Caco-2 (cell line): ENCODE measurements at regions of chr6 and their contacts with region 1.

Region 1: DNA sequence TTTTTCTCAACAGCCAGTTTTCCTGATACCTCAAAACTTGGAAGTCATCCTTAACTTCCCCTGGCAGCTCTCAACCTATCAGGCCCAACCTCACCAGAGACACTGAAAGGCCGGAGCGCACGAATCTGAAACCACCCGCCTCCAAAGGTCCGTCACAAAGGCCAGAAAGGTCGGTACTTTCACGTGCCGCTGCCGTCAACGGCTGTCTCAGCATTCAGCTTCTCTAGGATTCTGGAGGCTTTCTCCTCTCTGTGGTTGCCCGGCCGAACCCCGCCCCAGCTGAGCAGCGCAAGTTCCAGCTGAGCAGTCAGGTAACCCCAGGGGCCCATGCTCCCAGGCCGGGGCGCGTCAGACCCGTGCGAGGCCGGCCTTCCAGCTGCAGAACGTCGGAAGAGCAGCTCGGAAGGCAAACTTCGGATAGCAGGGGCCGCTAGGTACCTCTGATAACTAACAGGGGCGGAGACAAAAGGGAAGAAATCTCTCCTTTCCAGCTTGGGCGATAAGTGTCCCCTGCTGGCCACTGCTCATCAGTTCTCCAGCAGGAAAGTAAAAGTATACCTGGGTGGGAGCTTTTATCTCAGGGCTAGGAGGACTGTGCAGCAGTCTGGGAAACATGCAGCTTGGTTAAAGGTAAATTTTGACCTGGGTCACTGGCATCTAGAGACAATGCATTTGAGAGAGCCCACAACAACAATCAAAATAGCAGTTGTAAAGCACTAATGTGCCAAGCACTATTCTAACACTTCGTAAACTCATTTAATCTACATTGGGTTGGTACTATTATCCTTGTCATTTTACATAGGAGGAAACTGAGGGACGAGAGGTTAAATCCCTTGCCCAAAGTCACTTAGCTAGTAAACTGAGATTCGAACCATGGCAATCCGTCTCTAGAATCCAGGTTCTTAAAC is 16.1 kb downstream of the ZSCAN12 start:
- DNase-seq: peak; percentile 95
- H3K4me3 ChIP-seq: peak overlapping the region; percentile 50
- H3K4me3 Mint-ChIP-seq: peak overlapping the region; percentile 82
- H3K27ac Mint-ChIP-seq: peak overlapping the region; percentile 87
- H3K4me1 ChIP-seq: peaks cover 11% of the 10 kb centered on the region; the same call in 1 of the 2 replicates
- H3K4me1 Mint-ChIP-seq: peaks cover 18% of the 10 kb centered on the region
- H3K27me3 ChIP-seq: no peaks in the 10 kb centered on the region
- H3K27me3 Mint-ChIP-seq: peaks cover 7% of the 10 kb centered on the region
- CTCF ChIP-seq: peak; percentile 57 to 76

Region 2: GRCh38 chr6:28124102-28124970 is 259.2 kb before region 1 on chr6 and contains the start of gene ZSCAN16:
- CTCF ChIA-PET with region 1: interaction called, 6 read pairs
- POLR2A ChIA-PET with region 1: no interaction called
- intact Hi-C with region 1: loop called (anchors 1 kb)
- DNase-seq: peak; percentile 84 to 86
- H3K4me3 ChIP-seq: peak within 1 kb of the TSS; percentile 78
- H3K4me3 Mint-ChIP-seq: peak within 1 kb of the TSS; percentile 92
- H3K27ac Mint-ChIP-seq: peak within 1 kb of the TSS; percentile 83
- H3K4me1 ChIP-seq: no peaks in the 10 kb centered on the region
- H3K4me1 Mint-ChIP-seq: peaks cover 16% of the 10 kb centered on the region
- H3K27me3 ChIP-seq: no peaks in the 10 kb centered on the region
- H3K27me3 Mint-ChIP-seq: no peaks in the 10 kb centered on the region
- CTCF ChIP-seq: no peak
- total RNA-seq, gene ZSCAN16: 5.8 and 6.7 TPM in 2 replicates

Region 3: DNA sequence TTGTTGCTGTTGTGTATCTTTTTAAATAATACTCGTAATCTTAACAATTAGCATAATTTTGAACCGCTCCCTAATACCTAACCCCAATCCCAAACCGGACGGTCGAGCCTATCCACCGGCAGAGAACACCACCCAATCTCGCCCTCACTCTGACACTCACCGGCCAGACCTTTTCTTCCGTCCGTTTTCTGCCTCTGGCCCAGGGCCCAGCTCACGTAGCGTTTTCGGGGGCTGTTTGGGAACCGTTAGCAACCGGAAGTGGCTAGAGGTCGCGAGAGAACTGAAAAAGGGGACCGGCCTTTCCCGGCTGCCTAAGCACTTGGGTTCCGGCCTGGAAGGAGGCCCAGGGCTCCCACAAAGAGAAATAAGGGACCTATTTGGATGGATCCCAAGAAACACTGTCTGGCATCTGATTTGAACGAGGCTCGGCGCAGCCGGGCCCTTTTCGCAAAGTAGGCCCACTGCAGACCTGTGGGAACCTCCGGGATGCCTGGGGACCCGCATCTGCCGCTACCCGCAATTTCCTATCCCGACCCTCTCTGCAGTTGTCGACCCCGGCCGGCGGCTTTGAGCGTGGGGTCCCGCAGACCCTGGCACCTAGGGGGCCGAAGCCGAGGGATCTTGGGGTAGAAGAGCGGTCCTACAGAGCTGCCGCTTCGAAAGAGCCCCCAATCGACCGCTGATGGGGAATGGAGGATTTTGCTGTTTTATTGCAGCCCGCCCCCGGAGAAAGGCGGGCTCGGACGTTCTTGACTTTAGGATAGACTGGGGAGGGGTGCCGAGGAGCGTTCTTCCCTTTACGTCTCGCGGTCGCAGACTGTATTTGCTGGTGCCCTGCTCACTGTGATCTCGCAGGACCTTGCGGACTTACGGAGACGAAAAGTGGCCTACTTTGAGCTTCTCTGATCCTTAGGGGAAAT is 246.6 kb before region 1 on chr6:
- CTCF ChIA-PET with region 1: interaction called, 6 read pairs
- POLR2A ChIA-PET with region 1: interaction called, 4 read pairs
- intact Hi-C with region 1: loop called (anchors 1 kb)
- DNase-seq: peak; percentile 84 to 87
- H3K4me3 ChIP-seq: peak overlapping the region; percentile 77
- H3K4me3 Mint-ChIP-seq: peak overlapping the region; percentile 96
- H3K27ac Mint-ChIP-seq: peak overlapping the region; percentile 93
- H3K4me1 ChIP-seq: peaks cover 6% of the 10 kb centered on the region; the same call in 1 of the 2 replicates
- H3K4me1 Mint-ChIP-seq: peaks cover 13% of the 10 kb centered on the region
- H3K27me3 ChIP-seq: no peaks in the 10 kb centered on the region
- H3K27me3 Mint-ChIP-seq: no peaks in the 10 kb centered on the region
- CTCF ChIP-seq: no peak

Region 4: DNA sequence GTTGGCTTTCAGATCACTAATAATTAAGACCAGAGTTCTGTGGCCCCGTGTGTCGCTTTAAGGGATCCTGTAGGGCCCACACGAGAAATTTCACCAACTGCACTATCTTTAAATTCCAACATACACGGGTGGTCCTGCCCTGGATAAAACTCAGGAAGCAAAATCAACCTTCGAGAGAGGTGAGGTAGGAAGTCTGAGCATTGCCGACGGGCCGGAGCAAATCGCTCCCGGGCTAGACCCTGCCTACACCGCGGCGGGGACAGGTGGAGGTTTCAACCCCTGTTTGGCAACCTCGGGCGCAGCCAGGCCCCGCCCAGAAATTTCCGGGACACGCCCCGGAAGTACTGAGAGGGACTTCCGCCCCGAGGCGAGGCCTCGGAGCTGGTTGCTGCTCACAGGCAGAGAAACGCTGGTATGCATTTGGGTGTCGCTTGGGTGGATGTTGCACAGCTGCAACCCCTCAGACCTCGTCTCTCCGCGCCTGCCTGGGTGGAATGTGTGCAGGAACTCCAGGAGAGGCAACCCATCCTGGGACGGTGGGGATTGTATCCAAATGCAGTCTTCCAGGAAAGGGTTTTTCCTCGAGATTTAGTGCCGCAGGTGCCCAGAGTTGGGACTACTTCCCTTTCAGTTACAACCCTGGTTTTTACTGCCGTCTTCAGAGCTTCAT is 221.9 kb before region 1 on chr6:
- CTCF ChIA-PET with region 1: no interaction called
- POLR2A ChIA-PET with region 1: no interaction called
- intact Hi-C with region 1: no loop called
- DNase-seq: peak; percentile 57 to 63
- H3K4me3 ChIP-seq: peak overlapping the region; percentile 24
- H3K4me3 Mint-ChIP-seq: peak overlapping the region; percentile 49
- H3K27ac Mint-ChIP-seq: no peak overlapping the region
- H3K4me1 ChIP-seq: no peaks in the 10 kb centered on the region
- H3K4me1 Mint-ChIP-seq: no peaks in the 10 kb centered on the region
- H3K27me3 ChIP-seq: no peaks in the 10 kb centered on the region
- H3K27me3 Mint-ChIP-seq: no peaks in the 10 kb centered on the region
- CTCF ChIP-seq: no peak

Region 5: GRCh38 chr6:28225056-28225834 is 158.2 kb before region 1 on chr6 and contains the start of gene ZSCAN9:
- CTCF ChIA-PET with region 1: no interaction called
- POLR2A ChIA-PET with region 1: no interaction called
- intact Hi-C with region 1: loop called (anchors 2 kb)
- DNase-seq: peak; percentile 88 to 90
- H3K4me3 ChIP-seq: peak within 1 kb of the TSS; percentile 72
- H3K4me3 Mint-ChIP-seq: peak within 1 kb of the TSS; percentile 96
- H3K27ac Mint-ChIP-seq: peak within 1 kb of the TSS; percentile 82
- H3K4me1 ChIP-seq: peaks cover 5% of the 10 kb centered on the region; the same call in 1 of the 2 replicates
- H3K4me1 Mint-ChIP-seq: peaks cover 9% of the 10 kb centered on the region
- H3K27me3 ChIP-seq: peaks cover 1% of the 10 kb centered on the region; the same call in 1 of the 2 replicates
- H3K27me3 Mint-ChIP-seq: no peaks in the 10 kb centered on the region
- CTCF ChIP-seq: no peak
- total RNA-seq, gene ZSCAN9: 13.7 and 13.9 TPM in 2 replicates

Region 6: GRCh38 chr6:28252009-28252975 is 131.2 kb before region 1 on chr6 and contains the start of gene ZKSCAN4:
- CTCF ChIA-PET with region 1: no interaction called
- POLR2A ChIA-PET with region 1: interaction called, 3 read pairs
- intact Hi-C with region 1: loop called (anchors 1 kb)
- DNase-seq: peak; percentile 87 to 88
- H3K4me3 ChIP-seq: peak within 1 kb of the TSS; percentile 71
- H3K4me3 Mint-ChIP-seq: peak within 1 kb of the TSS; percentile 95
- H3K27ac Mint-ChIP-seq: peak within 1 kb of the TSS; percentile 82
- H3K4me1 ChIP-seq: peaks cover 4% of the 10 kb centered on the region; the same call in 1 of the 2 replicates
- H3K4me1 Mint-ChIP-seq: peaks cover 8% of the 10 kb centered on the region
- H3K27me3 ChIP-seq: no peaks in the 10 kb centered on the region
- H3K27me3 Mint-ChIP-seq: no peaks in the 10 kb centered on the region
- CTCF ChIP-seq: no peak
- total RNA-seq, gene ZKSCAN4: 5.0 and 5.5 TPM in 2 replicates

Region 7: GRCh38 chr6:28281288-28282064 is 102.0 kb before region 1 on chr6 and contains the start of gene PGBD1:
- CTCF ChIA-PET with region 1: interaction called, 3 read pairs
- POLR2A ChIA-PET with region 1: interaction called, 4 read pairs
- intact Hi-C with region 1: loop called (anchors 1 kb)
- DNase-seq: peak; percentile 81 to 84
- H3K4me3 ChIP-seq: peak within 1 kb of the TSS; percentile 74
- H3K4me3 Mint-ChIP-seq: peak within 1 kb of the TSS; percentile 85
- H3K27ac Mint-ChIP-seq: no peak within 1 kb of the TSS
- H3K4me1 ChIP-seq: 0 out of 2 replicates have a peak, but pooled peaks cover 4% of the 10 kb centered on the region
- H3K4me1 Mint-ChIP-seq: peaks cover 10% of the 10 kb centered on the region
- H3K27me3 ChIP-seq: no peaks in the 10 kb centered on the region
- H3K27me3 Mint-ChIP-seq: no peaks in the 10 kb centered on the region
- CTCF ChIP-seq: no peak
- total RNA-seq, gene PGBD1: 3.6 and 3.8 TPM in 2 replicates

Region 8: GRCh38 chr6:28335564-28336283 is 47.8 kb before region 1 on chr6 and contains the start of gene ZSCAN31:
- CTCF ChIA-PET with region 1: interaction called, 6 read pairs
- POLR2A ChIA-PET with region 1: interaction called, 17 read pairs
- intact Hi-C with region 1: no loop called
- DNase-seq: peak; percentile 92 to 95
- H3K4me3 ChIP-seq: peak within 1 kb of the TSS; percentile 54
- H3K4me3 Mint-ChIP-seq: no peak within 1 kb of the TSS
- H3K27ac Mint-ChIP-seq: no peak within 1 kb of the TSS
- H3K4me1 ChIP-seq: no peaks in the 10 kb centered on the region; the same call in 1 of the 2 replicates
- H3K4me1 Mint-ChIP-seq: peaks cover 16% of the 10 kb centered on the region
- H3K27me3 ChIP-seq: no peaks in the 10 kb centered on the region
- H3K27me3 Mint-ChIP-seq: peaks cover 2% of the 10 kb centered on the region
- CTCF ChIP-seq: no peak
- total RNA-seq, gene ZSCAN31: 1.7 and 3.4 TPM in 2 replicates